CD14-positive monocyte (primary cell): ENCODE measurements at regions of chr19 and their contacts with region 1.

Region 1: GRCh38 chr19:4246767-4247593 is at the start of gene YJU2:
- DNase-seq: peak; percentile 99 to 100 (median 100)
- H3K4me3 ChIP-seq: peak within 1 kb of the TSS; percentile 59 to 98 (median 84)
- H3K4me3 Mint-ChIP-seq: peak within 1 kb of the TSS; percentile 83 to 98
- H3K27ac ChIP-seq: peak within 1 kb of the TSS; percentile 90 to 100
- H3K27ac Mint-ChIP-seq: peak within 1 kb of the TSS; percentile 99 to 100 (median 100)
- H3K4me1 ChIP-seq: peaks cover 13 to 14% of the 10 kb centered on the region in 2 donors
- H3K4me1 Mint-ChIP-seq: peaks cover 12% of the 10 kb centered on the region
- H3K27me3 ChIP-seq: no peaks in the 10 kb centered on the region
- H3K27me3 Mint-ChIP-seq: peaks cover 0 to 3% (median 0%) of the 10 kb centered on the region in 3 donors
- CTCF ChIP-seq: peak; percentile 58
- polyA plus RNA-seq, gene YJU2: 8.6 to 19.3 (median 13.4) TPM

Region 2: GRCh38 chr19:3907626-3908265 is 339.2 kb before region 1 on chr19:
- intact Hi-C with region 1: no loop called
- DNase-seq: no peak
- H3K4me3 ChIP-seq: no peak overlapping the region
- H3K4me3 Mint-ChIP-seq: no peak overlapping the region
- H3K27ac ChIP-seq: no peak overlapping the region
- H3K27ac Mint-ChIP-seq: no peak overlapping the region
- H3K4me1 ChIP-seq: no peaks in the 10 kb centered on the region
- H3K4me1 Mint-ChIP-seq: no peaks in the 10 kb centered on the region
- H3K27me3 ChIP-seq: no peaks in the 10 kb centered on the region
- H3K27me3 Mint-ChIP-seq: peaks cover 7 to 8% (median 8%) of the 10 kb centered on the region in 3 donors
- CTCF ChIP-seq: no peak

Region 3: DNA sequence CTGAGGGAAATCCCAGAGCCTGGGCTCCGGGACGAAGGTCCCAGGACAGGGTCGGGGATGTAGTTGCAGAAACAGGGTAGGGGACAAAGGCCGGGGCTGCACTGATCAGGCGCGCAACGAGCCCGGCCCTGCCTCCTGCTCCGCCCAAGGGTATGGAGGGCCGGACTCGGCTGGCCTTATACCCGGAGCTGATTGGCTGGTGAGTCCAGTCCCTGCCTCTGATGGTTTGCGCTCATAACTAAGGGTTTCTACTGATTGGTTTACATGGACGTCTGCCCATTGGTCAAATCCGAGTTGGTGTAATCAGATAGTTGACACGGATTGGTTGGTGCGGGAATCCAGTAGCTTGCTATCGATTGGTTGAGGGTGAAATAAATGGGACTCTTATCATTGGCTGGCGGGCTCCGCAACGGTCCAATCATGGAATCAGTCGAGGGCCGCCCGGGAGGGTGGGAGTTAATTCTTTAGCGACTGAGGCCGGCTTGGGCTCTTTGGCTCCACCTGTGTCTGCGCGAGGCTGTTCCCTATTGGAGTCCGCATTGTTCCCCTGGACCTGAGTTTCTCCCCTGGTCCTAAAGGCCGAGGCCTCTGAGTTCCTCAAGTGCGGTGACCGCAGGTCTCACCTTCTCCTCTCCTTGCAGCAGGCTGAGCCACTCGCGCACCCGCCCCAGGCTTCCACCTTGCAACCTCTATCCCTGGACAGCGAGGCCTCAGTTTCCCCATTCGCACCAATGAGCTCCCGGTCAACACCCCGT is 95.8 kb after region 1 on chr19:
- intact Hi-C with region 1: loop called (anchors 5 to 10 kb)
- DNase-seq: peak; percentile 99 to 100 (median 100)
- H3K4me3 ChIP-seq: peak overlapping the region; percentile 52 to 84 (median 70)
- H3K4me3 Mint-ChIP-seq: peak overlapping the region; percentile 91 to 93
- H3K27ac ChIP-seq: peak overlapping the region; percentile 78 to 85
- H3K27ac Mint-ChIP-seq: peak overlapping the region; percentile 91 to 98 (median 95)
- H3K4me1 ChIP-seq: peaks cover 27 to 37% of the 10 kb centered on the region in 2 donors
- H3K4me1 Mint-ChIP-seq: peaks cover 35% of the 10 kb centered on the region
- H3K27me3 ChIP-seq: no peaks in the 10 kb centered on the region
- H3K27me3 Mint-ChIP-seq: peaks cover 0 to 13% (median 11%) of the 10 kb centered on the region in 3 donors
- CTCF ChIP-seq: peak; percentile 17

Region 4: GRCh38 chr19:4352701-4353121 is 105.7 kb after region 1 on chr19:
- intact Hi-C with region 1: loop called in 1 of 2 experiments (anchors 5 kb)
- DNase-seq: peak; percentile 33 to 58 (median 40)
- H3K4me3 ChIP-seq: no peak overlapping the region
- H3K4me3 Mint-ChIP-seq: no peak overlapping the region
- H3K27ac ChIP-seq: no peak overlapping the region
- H3K27ac Mint-ChIP-seq: no peak overlapping the region
- H3K4me1 ChIP-seq: no peaks in the 10 kb centered on the region
- H3K4me1 Mint-ChIP-seq: peaks cover 2% of the 10 kb centered on the region
- H3K27me3 ChIP-seq: no peaks in the 10 kb centered on the region
- H3K27me3 Mint-ChIP-seq: peaks cover 0 to 3% (median 0%) of the 10 kb centered on the region in 3 donors
- CTCF ChIP-seq: peak; percentile 95

Region 5: DNA sequence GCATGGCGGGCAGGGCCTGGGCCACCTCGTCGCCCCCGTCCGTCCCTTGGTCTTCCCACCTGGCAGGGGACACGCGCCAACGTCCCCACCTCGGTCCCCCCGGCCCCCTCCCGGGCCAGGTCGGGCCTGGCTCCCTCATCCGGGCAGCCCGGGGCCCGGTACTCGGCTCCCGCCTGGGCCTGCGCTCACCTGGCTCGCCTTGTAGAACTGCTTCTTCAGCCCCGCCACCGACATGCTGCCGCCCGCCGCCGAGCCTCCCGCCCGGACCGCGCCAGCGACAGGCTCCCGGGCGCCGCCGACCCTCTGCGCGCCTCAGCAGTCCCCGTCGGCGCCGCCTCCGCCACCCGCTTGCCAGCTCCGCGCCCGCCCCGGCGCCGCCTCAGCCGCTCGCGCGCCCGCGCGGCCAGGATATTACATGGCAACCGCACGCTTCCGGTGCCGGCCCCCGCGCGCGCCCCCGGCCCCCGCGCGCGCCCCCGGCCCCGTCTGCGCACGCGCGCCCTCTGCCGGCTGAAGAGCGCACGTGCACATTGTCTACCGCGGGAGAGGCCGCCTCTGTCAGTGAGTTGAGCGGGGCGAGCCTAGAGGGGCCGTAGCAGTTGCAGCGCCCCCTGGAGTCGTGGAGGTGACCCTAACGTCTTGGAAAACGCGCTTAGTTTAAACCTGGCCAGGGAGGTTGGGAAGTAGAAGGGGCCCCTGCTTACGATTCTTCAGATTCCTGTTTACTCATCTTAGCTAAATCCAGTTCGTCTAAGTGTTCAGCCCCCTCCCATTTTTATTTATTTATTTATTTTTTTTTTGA is 153.4 kb after region 1 on chr19 and contains the start of gene SH3GL1:
- intact Hi-C with region 1: loop called in 1 of 2 experiments (anchors 1 kb)
- DNase-seq: peak; percentile 94 to 97 (median 94)
- H3K4me3 ChIP-seq: peak within 1 kb of the TSS; percentile 85 to 98 (median 87)
- H3K4me3 Mint-ChIP-seq: peak within 1 kb of the TSS; percentile 87 to 93
- H3K27ac ChIP-seq: peak within 1 kb of the TSS; percentile 92 to 96
- H3K27ac Mint-ChIP-seq: peak within 1 kb of the TSS; percentile 95 to 98 (median 96)
- H3K4me1 ChIP-seq: peaks cover 37 to 50% of the 10 kb centered on the region in 2 donors
- H3K4me1 Mint-ChIP-seq: peaks cover 45% of the 10 kb centered on the region
- H3K27me3 ChIP-seq: no peaks in the 10 kb centered on the region
- H3K27me3 Mint-ChIP-seq: peaks cover 0 to 3% (median 0%) of the 10 kb centered on the region in 3 donors
- CTCF ChIP-seq: peak; percentile 96
- polyA plus RNA-seq, gene SH3GL1: 14.0 to 33.9 (median 15.0) TPM

Region 6: DNA sequence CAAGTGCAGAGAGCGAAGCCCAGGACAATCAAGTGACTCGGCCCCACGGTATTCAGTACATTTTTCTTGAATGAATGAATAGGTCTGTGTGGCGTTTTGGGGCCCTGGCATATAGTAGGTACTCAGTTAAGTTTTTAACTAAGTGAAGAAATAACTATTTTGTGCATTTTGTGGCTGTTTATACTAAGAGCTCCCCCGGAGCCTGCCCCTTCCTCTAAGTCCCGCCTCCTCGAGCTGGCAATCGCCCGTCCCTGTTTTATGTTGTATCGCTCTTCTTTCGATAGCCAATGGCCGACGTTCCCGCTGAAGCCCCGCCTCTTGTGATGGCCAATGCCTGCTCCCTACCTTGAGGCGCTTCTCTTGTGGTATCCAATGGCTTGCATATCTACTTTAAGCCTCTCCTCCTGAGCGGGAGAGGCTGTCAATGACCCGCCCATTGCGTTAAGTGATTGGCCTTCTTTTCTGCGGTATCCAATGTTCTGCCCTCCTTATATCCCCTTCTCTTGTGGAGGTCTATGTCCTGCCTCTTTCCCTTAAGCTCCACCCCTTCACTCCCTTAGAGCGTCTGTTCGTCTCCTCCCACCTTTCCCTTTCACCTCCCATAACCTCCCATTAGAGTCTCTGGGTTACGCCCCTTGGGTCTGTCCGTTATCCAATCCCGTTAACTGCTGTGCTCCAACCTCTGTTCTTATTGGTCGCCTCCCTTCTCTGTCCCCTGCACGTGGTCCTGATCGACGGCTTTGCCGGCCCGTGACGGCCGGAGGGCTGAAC is 224.6 kb after region 1 on chr19:
- intact Hi-C with region 1: loop called in 1 of 2 experiments (anchors 5 kb)
- DNase-seq: peak; percentile 99 to 100 (median 100)
- H3K4me3 ChIP-seq: peak overlapping the region; percentile 74 to 94 (median 83)
- H3K4me3 Mint-ChIP-seq: no peak overlapping the region
- H3K27ac ChIP-seq: peak overlapping the region; percentile 74 to 87
- H3K27ac Mint-ChIP-seq: no peak overlapping the region
- H3K4me1 ChIP-seq: peaks cover 30 to 35% of the 10 kb centered on the region in 2 donors
- H3K4me1 Mint-ChIP-seq: peaks cover 24% of the 10 kb centered on the region
- H3K27me3 ChIP-seq: no peaks in the 10 kb centered on the region
- H3K27me3 Mint-ChIP-seq: peaks cover 0 to 1% (median 0%) of the 10 kb centered on the region in 3 donors
- CTCF ChIP-seq: no peak

Region 7: GRCh38 chr19:4518345-4519171 is 271.6 kb after region 1 on chr19 and contains the start of gene PLIN4:
- intact Hi-C with region 1: no loop called
- DNase-seq: no peak
- H3K4me3 ChIP-seq: no peak within 1 kb of the TSS
- H3K4me3 Mint-ChIP-seq: no peak within 1 kb of the TSS
- H3K27ac ChIP-seq: no peak within 1 kb of the TSS
- H3K27ac Mint-ChIP-seq: peak within 1 kb of the TSS in 1 of 7 donors; percentile 20
- H3K4me1 ChIP-seq: no peaks in the 10 kb centered on the region
- H3K4me1 Mint-ChIP-seq: no peaks in the 10 kb centered on the region
- H3K27me3 ChIP-seq: no peaks in the 10 kb centered on the region
- H3K27me3 Mint-ChIP-seq: peaks cover 0 to 13% (median 9%) of the 10 kb centered on the region in 3 donors
- CTCF ChIP-seq: no peak
- polyA plus RNA-seq, gene PLIN4: 0.05 to 0.19 TPM in 2 of 3 donors, not detected in the other